Activated CD8-positive, alpha-beta T cell treated with anti-CD3 and anti-CD28 coated beads for 36 hours (primary cell): ENCODE measurements at regions of chr2 and their contacts with region 1.

Region 1: DNA sequence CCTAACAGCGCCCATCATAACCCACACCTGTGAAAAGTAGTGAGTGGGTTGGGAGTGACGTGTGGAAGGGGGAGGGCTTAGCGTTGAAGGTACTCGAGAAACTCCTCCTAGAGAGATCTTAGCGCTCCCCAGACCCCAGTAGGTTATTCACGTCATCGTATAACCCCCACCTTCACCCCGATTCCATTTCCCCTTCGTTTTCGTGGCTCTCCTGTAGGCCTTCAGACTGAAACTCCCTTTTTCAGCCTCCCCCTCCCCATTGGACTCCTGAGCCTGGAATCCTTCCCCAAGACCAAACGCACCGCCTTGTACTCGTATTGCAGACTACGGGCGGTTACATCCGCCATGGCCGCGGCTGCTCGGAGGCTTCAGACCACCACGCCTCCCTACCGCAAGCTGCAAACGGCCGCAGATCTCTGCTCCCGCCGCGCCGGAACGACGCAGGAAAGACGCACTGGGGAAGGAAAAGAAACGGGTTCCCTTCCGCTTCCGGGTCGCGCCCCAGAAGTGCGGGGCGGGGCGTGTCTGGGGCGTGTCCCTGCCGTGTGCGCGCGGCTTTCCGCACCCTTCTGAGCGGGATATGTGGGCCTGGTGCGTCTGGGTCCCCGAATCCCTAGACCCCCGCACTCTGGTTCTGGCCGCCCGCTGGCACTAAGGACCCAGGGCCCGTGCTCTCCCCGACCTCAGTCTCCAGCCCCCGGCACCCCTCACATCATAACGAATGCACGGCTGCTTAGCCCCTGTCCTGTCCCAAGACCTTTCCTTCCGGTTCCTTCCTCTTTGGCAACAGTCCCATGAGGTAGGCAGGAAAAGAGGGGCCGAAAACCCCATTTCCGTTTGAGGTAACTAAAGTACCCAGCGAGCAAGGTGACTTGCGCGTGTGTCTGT is at the start of gene SNRNP200:
- DNase-seq: peak; percentile 94
- ATAC-seq: peak; percentile 96
- H3K4me3 Mint-ChIP-seq: peak within 1 kb of the TSS; percentile 100
- H3K27ac Mint-ChIP-seq: peak within 1 kb of the TSS; percentile 99
- H3K4me1 Mint-ChIP-seq: peaks cover 48% of the 10 kb centered on the region
- H3K27me3 Mint-ChIP-seq: no peaks in the 10 kb centered on the region
- CTCF ChIP-seq: no peak
- total RNA-seq, gene SNRNP200: 175 to 178 TPM

Region 2: GRCh38 chr2:96265840-96266679 is 39.3 kb before region 1 on chr2 and contains the starts of genes CIAO1 and TMEM127:
- CTCF ChIA-PET with region 1: interaction called, 11 read pairs
- POLR2A ChIA-PET with region 1: interaction called, 5 read pairs
- intact Hi-C with region 1: no loop called
- DNase-seq: peak; percentile 99
- ATAC-seq: peak; percentile 95
- H3K4me3 Mint-ChIP-seq: peak within 1 kb of the TSS; percentile 85
- H3K27ac Mint-ChIP-seq: peak within 1 kb of the TSS; percentile 94
- H3K4me1 Mint-ChIP-seq: peaks cover 45% of the 10 kb centered on the region
- H3K27me3 Mint-ChIP-seq: no peaks in the 10 kb centered on the region
- CTCF ChIP-seq: peak; percentile 18
- total RNA-seq, gene CIAO1: 72.1 to 72.3 TPM
- total RNA-seq, gene TMEM127: 13.1 to 15.0 TPM

Region 3: GRCh38 chr2:96291751-96292150 is 13.6 kb before region 1 on chr2:
- CTCF ChIA-PET with region 1: no interaction called
- POLR2A ChIA-PET with region 1: interaction called, 15 read pairs
- intact Hi-C with region 1: no loop called
- DNase-seq: no peak
- ATAC-seq: no peak
- H3K4me3 Mint-ChIP-seq: no peak overlapping the region
- H3K27ac Mint-ChIP-seq: no peak overlapping the region
- H3K4me1 Mint-ChIP-seq: no peaks in the 10 kb centered on the region
- H3K27me3 Mint-ChIP-seq: no peaks in the 10 kb centered on the region
- CTCF ChIP-seq: no peak

Region 4: GRCh38 chr2:96320728-96321622 is 15.6 kb after region 1 on chr2:
- CTCF ChIA-PET with region 1: interaction called, 19 read pairs
- POLR2A ChIA-PET with region 1: interaction called, 119 read pairs
- intact Hi-C with region 1: no loop called
- DNase-seq: peak; percentile 53
- ATAC-seq: peak; percentile 13
- H3K4me3 Mint-ChIP-seq: peak overlapping the region; percentile 76
- H3K27ac Mint-ChIP-seq: peak overlapping the region; percentile 54
- H3K4me1 Mint-ChIP-seq: peaks cover 53% of the 10 kb centered on the region
- H3K27me3 Mint-ChIP-seq: no peaks in the 10 kb centered on the region
- CTCF ChIP-seq: no peak

Region 5: DNA sequence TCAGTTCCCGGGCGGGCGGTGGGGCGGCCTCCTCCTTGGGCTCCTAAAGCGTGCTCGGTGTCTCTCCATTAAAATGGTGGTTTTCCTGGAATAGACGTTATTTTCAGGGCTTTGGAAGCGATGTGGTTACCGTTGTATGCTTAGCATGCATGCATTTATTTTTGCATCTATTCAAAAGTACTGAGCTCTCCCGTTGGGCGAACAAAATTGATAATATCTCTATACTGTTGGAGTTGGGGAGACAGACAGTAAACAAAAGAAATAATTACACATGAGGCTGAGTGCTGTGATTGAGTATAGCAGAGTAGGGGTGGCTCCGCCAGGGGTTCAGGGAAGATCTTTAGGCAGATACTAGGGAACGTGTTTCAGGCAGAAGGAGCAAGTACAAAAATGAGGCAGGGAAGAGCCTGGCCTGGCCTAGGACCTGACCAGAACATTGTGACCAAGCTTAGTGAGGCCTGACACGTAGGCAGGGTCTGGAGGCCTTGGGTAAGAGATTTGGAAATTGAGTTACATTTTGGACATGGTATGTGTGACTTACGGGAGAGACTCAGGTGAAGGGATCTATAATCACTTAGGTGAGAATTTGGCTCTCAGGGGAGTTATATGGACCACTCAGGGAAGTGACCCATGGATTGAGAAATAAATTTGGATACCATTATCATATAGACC is 30.9 kb after region 1 on chr2:
- CTCF ChIA-PET with region 1: interaction called, 6 read pairs
- POLR2A ChIA-PET with region 1: interaction called, 29 read pairs
- intact Hi-C with region 1: loop called (anchors 5 kb)
- DNase-seq: no peak
- ATAC-seq: no peak
- H3K4me3 Mint-ChIP-seq: peak overlapping the region; percentile 97
- H3K27ac Mint-ChIP-seq: peak overlapping the region; percentile 85
- H3K4me1 Mint-ChIP-seq: peaks cover 41% of the 10 kb centered on the region
- H3K27me3 Mint-ChIP-seq: no peaks in the 10 kb centered on the region
- CTCF ChIP-seq: no peak

Region 6: GRCh38 chr2:96344011-96344410 is 38.7 kb after region 1 on chr2:
- CTCF ChIA-PET with region 1: interaction called, 5 read pairs
- POLR2A ChIA-PET with region 1: interaction called, 6 read pairs
- intact Hi-C with region 1: loop called (anchors 5 kb)
- DNase-seq: peak; percentile 56
- ATAC-seq: peak; percentile 79
- H3K4me3 Mint-ChIP-seq: no peak overlapping the region
- H3K27ac Mint-ChIP-seq: peak overlapping the region; percentile 68
- H3K4me1 Mint-ChIP-seq: peaks cover 40% of the 10 kb centered on the region
- H3K27me3 Mint-ChIP-seq: no peaks in the 10 kb centered on the region
- CTCF ChIP-seq: no peak

Region 7: GRCh38 chr2:96423828-96424227 is 118.5 kb after region 1 on chr2:
- CTCF ChIA-PET with region 1: no interaction called
- POLR2A ChIA-PET with region 1: no interaction called
- intact Hi-C with region 1: no loop called
- DNase-seq: no peak
- ATAC-seq: no peak
- H3K4me3 Mint-ChIP-seq: no peak overlapping the region
- H3K27ac Mint-ChIP-seq: no peak overlapping the region
- H3K4me1 Mint-ChIP-seq: peaks cover 10% of the 10 kb centered on the region
- H3K27me3 Mint-ChIP-seq: peaks cover 10% of the 10 kb centered on the region
- CTCF ChIP-seq: no peak